Activated B cell treated with CpG ODN at 0.5 μM for 24 hours (primary cell): ENCODE measurements at regions of chr1 and their contacts with region 1.

Region 1: GRCh38 chr1:119140177-119141019 is at the start of gene WARS2:
- DNase-seq: peak; percentile 83
- ATAC-seq: peak; percentile 93
- H3K4me3 Mint-ChIP-seq: no peak within 1 kb of the TSS
- H3K27ac Mint-ChIP-seq: no peak within 1 kb of the TSS
- H3K4me1 Mint-ChIP-seq: peaks cover 4% of the 10 kb centered on the region
- H3K27me3 Mint-ChIP-seq: no peaks in the 10 kb centered on the region
- CTCF ChIP-seq: no peak
- total RNA-seq, gene WARS2: 15.1 and 15.2 TPM in 2 replicates

Region 2: DNA sequence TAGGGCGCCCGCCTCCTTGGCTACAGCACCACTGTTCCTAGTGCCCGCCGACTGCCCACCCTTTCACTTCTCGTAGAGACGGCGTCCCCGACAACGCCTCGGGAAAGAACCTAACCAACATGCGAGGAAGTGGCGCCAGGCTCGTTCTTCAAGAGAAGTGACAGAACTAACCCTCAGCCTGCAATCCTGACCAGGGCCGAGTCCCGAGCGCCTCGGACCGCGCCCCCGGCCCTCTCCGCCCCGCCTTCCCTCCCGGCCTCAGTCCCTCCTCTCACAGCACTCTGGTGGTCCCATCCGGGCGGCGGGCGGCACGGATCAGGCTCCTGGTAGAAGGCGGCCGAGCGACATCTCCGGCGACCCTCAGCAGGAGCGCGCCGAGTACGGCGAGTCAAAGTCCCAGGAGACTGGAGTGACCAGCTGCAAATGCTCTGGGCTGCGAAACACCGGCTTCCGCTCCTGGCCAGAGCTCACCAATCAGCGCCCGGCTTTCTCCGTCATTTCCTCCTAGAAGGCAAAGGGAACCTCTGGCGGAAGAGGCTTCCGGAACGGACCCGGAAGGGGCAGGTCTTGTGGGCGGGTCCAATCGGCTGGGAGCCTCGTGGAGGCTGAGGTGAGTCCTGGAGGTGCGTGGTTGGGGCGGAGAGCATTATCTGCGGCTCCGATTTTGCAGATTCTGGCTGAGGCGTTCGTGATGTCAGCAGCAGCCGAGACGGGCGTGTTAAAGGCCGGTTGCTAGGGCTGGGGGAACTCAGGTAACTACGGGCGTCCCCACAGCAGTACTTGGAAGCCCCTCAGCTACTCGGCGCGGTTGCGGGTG is 1211.0 kb before region 1 on chr1 and contains the starts of genes GDAP2 and WDR3:
- CTCF ChIA-PET with region 1: no interaction called
- POLR2A ChIA-PET with region 1: no interaction called
- intact Hi-C with region 1: loop called (anchors 1 kb)
- DNase-seq: peak; percentile 84
- ATAC-seq: peak; percentile 91
- H3K4me3 Mint-ChIP-seq: peak within 1 kb of the TSS; percentile 94
- H3K27ac Mint-ChIP-seq: peak within 1 kb of the TSS; percentile 91
- H3K4me1 Mint-ChIP-seq: peaks cover 57% of the 10 kb centered on the region
- H3K27me3 Mint-ChIP-seq: no peaks in the 10 kb centered on the region
- CTCF ChIP-seq: no peak
- total RNA-seq, gene GDAP2: 19.6 and 20.6 TPM in 2 replicates
- total RNA-seq, gene WDR3: 32.7 and 38.0 TPM in 2 replicates

Region 3: DNA sequence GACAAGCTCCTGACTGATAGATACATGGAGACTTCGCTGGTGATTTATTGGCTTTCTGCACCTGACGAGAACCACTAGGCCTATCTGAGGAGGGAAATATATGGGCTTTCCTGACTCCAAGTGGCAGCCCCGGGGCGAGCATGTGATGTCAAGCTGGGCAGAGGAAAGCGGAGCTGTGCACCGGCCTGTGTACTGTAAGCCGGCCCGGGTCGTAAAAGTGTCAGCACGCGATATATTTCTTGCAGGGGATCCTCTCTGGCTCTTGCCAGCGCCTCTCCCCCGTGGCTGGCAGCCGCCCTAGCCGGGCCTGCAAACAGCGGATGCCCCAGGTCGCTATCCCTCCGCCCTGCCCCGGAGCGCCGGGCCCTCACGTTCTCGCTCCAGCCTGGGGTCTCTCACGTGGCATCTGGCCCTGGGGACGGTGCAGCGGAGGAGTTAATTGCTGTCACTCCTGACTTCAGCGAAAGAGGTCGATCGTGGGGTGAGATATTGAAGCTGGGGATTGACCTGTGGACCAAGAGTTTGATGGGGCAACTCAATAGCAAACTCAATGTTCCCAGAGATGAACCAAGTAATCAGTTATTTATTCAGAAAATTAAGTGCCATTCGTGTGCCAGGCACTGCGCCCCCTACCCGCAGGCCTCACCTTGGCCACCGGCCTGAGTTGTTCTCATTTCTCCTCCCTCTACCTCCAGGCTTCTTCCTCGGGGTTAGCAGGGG is 187.2 kb after region 1 on chr1:
- CTCF ChIA-PET with region 1: no interaction called
- POLR2A ChIA-PET with region 1: no interaction called
- intact Hi-C with region 1: loop called (anchors 5 kb)
- DNase-seq: peak; percentile 19
- ATAC-seq: peak; percentile 47
- H3K4me3 Mint-ChIP-seq: peak overlapping the region; percentile 82
- H3K27ac Mint-ChIP-seq: no peak overlapping the region
- H3K4me1 Mint-ChIP-seq: peaks cover 22% of the 10 kb centered on the region
- H3K27me3 Mint-ChIP-seq: peaks cover 6% of the 10 kb centered on the region
- CTCF ChIP-seq: no peak

Region 4: GRCh38 chr1:120176092-120176855 is 1035.9 kb after region 1 on chr1 and contains the start of gene SEC22B:
- CTCF ChIA-PET with region 1: no interaction called
- POLR2A ChIA-PET with region 1: interaction called, 3 read pairs
- intact Hi-C with region 1: loop called (anchors 10 kb)
- DNase-seq: peak; percentile 74
- ATAC-seq: peak; percentile 99
- H3K4me3 Mint-ChIP-seq: peak within 1 kb of the TSS; percentile 97
- H3K27ac Mint-ChIP-seq: peak within 1 kb of the TSS; percentile 94
- H3K4me1 Mint-ChIP-seq: peaks cover 12% of the 10 kb centered on the region
- H3K27me3 Mint-ChIP-seq: peaks cover 5% of the 10 kb centered on the region
- CTCF ChIP-seq: no peak
- total RNA-seq, gene SEC22B: 24.5 and 27.5 TPM in 2 replicates